ENCODE measurements at regions of chr15 and their contacts with region 1.

Region 1: GRCh38 chr15:90201130-90201949 is at the start of gene SEMA4B:
- DNase-seq: peak in 1 of 2 experiments; percentile 90
- H3K4me3 ChIP-seq: peak within 1 kb of the TSS; percentile 55 to 95 (median 81)
- H3K27ac ChIP-seq: peak within 1 kb of the TSS; percentile 64; the same call in 1 of the 2 replicates
- H3K4me1 ChIP-seq: peaks cover 0 to 21% (median 7%) of the 10 kb centered on the region in 4 experiments; a peak in 5 of 7 replicates
- H3K27me3 ChIP-seq: no peaks in the 10 kb centered on the region
- CTCF ChIP-seq: no peak
- EP300 ChIP-seq: no peak
- POLR2A ChIP-seq: peak in 1 of 2 experiments; percentile 50; a peak in 1 of 3 replicates
- RAD21 ChIP-seq: peak in 1 of 2 experiments; percentile 0; a peak in 1 of 4 replicates
- total RNA-seq, gene SEMA4B: 42.7 and 43.6 TPM in 2 replicates

Region 2: DNA sequence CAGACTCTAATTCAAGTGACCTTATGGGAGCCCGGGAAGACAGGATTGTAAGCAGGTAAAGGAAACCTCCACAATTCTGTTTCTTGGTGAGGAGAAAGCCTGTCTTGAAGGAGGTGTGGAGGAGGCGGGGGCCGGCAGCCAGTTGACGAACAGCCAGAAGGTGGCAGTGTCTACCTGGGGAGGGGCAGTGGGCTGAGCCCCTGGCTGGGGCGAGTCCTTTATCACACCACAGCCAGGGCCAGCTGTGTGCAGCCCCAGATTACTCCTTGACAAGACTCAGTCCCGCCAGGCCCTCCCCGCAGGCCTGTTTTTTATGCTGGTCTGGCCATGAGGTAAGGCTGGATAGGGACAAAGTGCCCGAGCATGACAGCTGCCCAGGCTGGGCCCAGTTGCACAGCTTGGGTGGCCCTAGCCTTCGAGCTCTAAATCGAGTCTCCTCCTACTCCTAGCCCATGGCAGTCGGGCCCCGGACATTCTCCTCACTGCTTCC is 58.1 kb before region 1 on chr15:
- CTCF ChIA-PET with region 1: interaction called, 44 read pairs
- POLR2A ChIA-PET with region 1: interaction called, 4 read pairs
- DNase-seq: peak; percentile 58 to 91
- H3K4me3 ChIP-seq: no peak overlapping the region
- H3K27ac ChIP-seq: no peak overlapping the region
- H3K4me1 ChIP-seq: no peaks in the 10 kb centered on the region; a peak in 3 of 7 replicates
- H3K27me3 ChIP-seq: no peaks in the 10 kb centered on the region
- CTCF ChIP-seq: peak; percentile 89 to 97 (median 93)
- EP300 ChIP-seq: no peak
- POLR2A ChIP-seq: no peak
- RAD21 ChIP-seq: peak; percentile 97 to 99

Region 3: GRCh38 chr15:90151989-90152645 is 49.2 kb before region 1 on chr15:
- CTCF ChIA-PET with region 1: interaction called, 4 read pairs
- POLR2A ChIA-PET with region 1: interaction called, 12 read pairs
- DNase-seq: peak in 1 of 2 experiments; percentile 82
- H3K4me3 ChIP-seq: no peak overlapping the region
- H3K27ac ChIP-seq: peak overlapping the region; percentile 71
- H3K4me1 ChIP-seq: peaks cover 5 to 10% (median 6%) of the 10 kb centered on the region in 4 experiments
- H3K27me3 ChIP-seq: no peaks in the 10 kb centered on the region; a peak in 1 of 7 replicates
- CTCF ChIP-seq: no peak
- EP300 ChIP-seq: 0 out of 3 replicates have a peak, but pooled peaks of 1 of the 2 experiments have one; percentile 23
- POLR2A ChIP-seq: no peak
- RAD21 ChIP-seq: no peak

Region 4: DNA sequence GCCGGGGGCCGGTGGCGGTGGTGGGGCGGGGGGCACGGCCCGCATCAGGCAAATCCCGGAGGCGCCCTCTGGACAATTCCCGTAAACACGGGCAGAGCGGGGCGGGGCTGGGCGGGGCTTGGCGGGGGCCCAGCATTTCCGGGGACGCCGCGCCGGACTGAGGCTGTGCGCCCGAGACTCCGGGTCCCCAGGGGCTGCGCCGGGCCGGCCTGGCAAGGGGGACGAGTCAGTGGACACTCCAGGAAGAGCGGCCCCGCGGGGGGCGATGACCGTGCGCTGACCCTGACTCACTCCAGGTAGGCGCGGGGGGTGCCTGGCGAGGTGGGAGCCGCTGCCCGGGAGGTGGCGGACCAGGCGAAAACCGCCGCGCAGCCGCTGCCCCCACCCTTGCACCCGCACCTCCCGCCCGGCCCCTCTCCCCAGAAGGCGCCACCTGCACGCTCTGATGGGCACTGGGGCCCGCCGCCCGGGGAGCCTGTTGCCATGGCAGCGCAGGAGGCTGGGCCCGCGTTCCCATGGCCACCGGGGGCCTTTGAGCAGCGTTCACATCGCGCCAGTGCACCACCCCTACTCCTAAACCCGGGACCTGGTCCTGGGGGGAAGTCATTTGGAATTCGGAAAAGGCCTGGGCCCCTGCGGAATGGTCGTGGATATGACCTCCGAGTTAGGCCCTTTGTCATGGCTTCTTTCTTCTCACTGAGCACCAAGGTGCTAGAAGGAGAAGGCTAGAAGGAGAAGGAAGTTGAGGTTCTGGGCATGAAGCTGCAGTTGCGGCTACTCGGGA is 16.4 kb before region 1 on chr15:
- CTCF ChIA-PET with region 1: interaction called, 11 read pairs
- POLR2A ChIA-PET with region 1: interaction called, 16 read pairs
- DNase-seq: peak in 1 of 2 experiments; percentile 83
- H3K4me3 ChIP-seq: peak overlapping the region; percentile 58 to 65 (median 58)
- H3K27ac ChIP-seq: no peak overlapping the region
- H3K4me1 ChIP-seq: peaks cover 0 to 10% (median 5%) of the 10 kb centered on the region in 4 experiments; a peak in 4 of 7 replicates
- H3K27me3 ChIP-seq: no peaks in the 10 kb centered on the region
- CTCF ChIP-seq: no peak
- EP300 ChIP-seq: no peak
- POLR2A ChIP-seq: no peak
- RAD21 ChIP-seq: no peak

Region 5: DNA sequence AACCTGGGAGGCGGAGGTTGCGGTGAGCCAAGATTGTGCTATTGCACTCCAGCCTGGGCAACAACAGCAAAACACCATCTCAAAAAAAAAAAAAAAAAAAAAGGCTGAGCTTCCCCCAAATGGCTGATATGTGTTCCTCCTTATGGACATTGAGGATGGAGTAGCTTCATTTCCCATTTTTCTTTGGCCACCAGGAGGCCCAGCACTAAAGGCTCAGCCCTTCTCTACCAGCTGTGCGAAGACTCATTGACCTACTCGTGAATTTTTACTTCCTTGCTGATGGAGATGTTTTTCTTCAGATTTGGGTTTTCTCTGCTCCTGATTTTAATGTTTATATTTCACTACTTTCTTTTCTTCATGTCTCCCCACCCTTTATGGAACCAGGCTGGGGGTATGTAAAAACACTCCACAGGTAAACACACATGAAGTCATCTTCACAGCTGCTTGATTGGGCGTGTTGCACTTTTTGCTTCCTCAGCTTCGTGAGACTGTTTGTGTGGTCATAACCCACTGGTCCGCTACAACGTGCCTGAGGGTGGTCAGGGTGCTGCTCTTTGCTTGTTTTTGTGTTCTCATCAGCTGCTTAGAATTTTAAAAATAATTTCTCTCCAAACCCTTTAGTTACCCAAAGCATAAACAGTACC is 13.3 kb after region 1 on chr15:
- CTCF ChIA-PET with region 1: interaction called, 182 read pairs
- POLR2A ChIA-PET with region 1: interaction called, 25 read pairs
- DNase-seq: no peak
- H3K4me3 ChIP-seq: no peak overlapping the region
- H3K27ac ChIP-seq: no peak overlapping the region
- H3K4me1 ChIP-seq: peaks cover 0 to 4% (median 2%) of the 10 kb centered on the region in 4 experiments; a peak in 4 of 7 replicates
- H3K27me3 ChIP-seq: no peaks in the 10 kb centered on the region
- CTCF ChIP-seq: peak in 1 of 3 experiments; percentile 47; a peak in 2 of 4 replicates
- EP300 ChIP-seq: no peak
- POLR2A ChIP-seq: no peak
- RAD21 ChIP-seq: peak in 1 of 2 experiments; percentile 27; a peak in 1 of 4 replicates

Region 6: DNA sequence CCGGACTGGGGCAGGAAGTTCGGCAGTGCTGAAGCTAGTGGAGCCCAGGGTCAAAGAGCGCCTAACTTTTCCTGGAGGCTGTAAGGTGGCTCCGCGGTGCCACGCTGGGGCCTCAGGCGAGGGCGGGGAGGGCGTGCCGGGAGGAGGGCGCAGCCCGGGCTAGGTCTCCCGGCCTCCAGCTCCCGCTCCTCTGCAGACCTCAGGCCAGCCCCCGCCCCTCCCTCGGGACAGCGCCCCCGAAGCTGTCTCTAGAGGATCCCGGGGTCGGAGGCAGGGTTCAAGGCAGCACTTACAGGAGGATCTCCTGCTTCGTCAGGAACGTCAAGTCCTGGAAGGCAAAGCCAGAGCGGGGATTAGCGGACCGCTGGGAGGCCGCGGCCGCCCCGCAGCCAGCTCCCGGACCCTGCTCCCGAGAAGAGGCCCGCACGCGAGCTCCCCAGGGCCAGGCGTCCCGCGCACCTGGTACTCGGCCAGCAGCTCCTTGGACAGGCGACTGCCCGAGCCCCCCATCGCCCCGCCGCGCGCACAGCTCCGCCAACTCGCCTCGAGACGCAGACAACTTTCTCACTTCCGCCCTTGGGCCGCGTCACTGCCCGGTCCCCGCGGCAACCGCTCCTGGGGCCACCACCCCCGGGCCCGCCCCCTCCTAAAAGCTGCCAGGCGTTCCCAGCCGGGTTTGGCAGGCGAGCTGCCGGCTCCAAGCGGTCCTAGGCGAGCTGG is 32.2 kb after region 1 on chr15 and contains the start of gene CIB1:
- CTCF ChIA-PET with region 1: interaction called, 7 read pairs
- POLR2A ChIA-PET with region 1: interaction called, 12 read pairs
- DNase-seq: peak; percentile 76 to 94
- H3K4me3 ChIP-seq: peak within 1 kb of the TSS; percentile 57 to 76 (median 73)
- H3K27ac ChIP-seq: no peak within 1 kb of the TSS
- H3K4me1 ChIP-seq: peaks cover 0 to 6% (median under 1%) of the 10 kb centered on the region in 4 experiments; a peak in 4 of 7 replicates
- H3K27me3 ChIP-seq: no peaks in the 10 kb centered on the region
- CTCF ChIP-seq: peak in 2 of 3 experiments; percentile 71 to 76; a peak in 3 of 4 replicates
- EP300 ChIP-seq: no peak
- POLR2A ChIP-seq: peak in 1 of 2 experiments; percentile 67; a peak in 2 of 3 replicates
- RAD21 ChIP-seq: no peak
- total RNA-seq, gene CIB1: 26.0 and 29.1 TPM in 2 replicates

Region 7: GRCh38 chr15:90362936-90363212 is 161.5 kb after region 1 on chr15:
- CTCF ChIA-PET with region 1: no interaction called
- POLR2A ChIA-PET with region 1: no interaction called
- DNase-seq: no peak
- H3K4me3 ChIP-seq: no peak overlapping the region
- H3K27ac ChIP-seq: no peak overlapping the region
- H3K4me1 ChIP-seq: no peaks in the 10 kb centered on the region
- H3K27me3 ChIP-seq: 0 out of 7 replicates have a peak, but pooled peaks cover 0 to 3% (median 0%) of the 10 kb centered on the region in 4 experiments
- CTCF ChIP-seq: no peak
- EP300 ChIP-seq: no peak
- POLR2A ChIP-seq: no peak
- RAD21 ChIP-seq: no peak

Measured in H1 (cell line).